ENCODE measurements at regions of chr3 and their contacts with region 1.

Region 1: DNA sequence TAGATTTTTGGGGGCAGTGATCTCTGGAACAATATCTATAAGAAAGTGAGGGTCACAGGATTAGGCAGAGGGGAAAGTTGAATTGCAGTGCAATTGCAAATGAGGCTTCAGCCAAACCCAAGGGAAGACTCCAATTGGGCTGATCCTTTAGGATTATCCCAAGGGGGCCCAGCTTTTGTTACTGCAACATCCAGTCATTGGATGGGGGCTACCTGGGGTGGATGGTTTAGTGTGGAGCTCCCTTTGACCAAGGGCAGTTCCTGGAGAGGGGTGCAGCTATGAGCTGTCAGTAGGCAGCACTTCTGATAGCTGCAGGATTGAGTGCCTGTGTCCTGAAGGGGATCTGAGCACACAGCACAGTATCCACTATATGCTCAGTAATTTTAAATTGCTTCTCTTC is 355.2 kb upstream of the AZI2 start:
- DNase-seq: no peak
- ATAC-seq: no peak
- H3K4me3 ChIP-seq: no peak overlapping the region
- H3K27ac ChIP-seq: no peak overlapping the region
- H3K4me1 ChIP-seq: no peaks in the 10 kb centered on the region
- H3K27me3 ChIP-seq: 0 out of 2 replicates have a peak, but pooled peaks cover 2% of the 10 kb centered on the region
- CTCF ChIP-seq: no peak

Region 2: DNA sequence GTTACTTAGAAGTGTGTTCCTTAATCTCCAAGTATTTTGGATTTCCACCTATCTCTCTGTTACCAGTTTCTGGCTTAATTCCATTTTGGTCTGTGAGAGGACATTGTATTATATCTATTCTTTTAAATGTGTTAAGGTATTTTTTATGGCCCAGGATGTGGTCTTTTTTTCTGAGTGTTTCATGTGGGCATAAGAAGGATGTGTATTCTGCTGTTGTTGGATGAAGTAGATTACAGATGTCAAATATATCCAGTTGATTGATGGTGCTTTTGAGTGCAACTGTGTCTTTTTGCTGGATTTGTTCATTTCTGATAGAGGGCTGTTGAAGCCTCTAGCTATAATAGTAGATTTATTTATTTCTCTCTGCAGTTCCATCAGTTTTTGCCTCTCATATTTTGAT is 218.7 kb before region 1 on chr3:
- CTCF ChIA-PET with region 1: no interaction called
- POLR2A ChIA-PET with region 1: interaction called, 11 read pairs
- intact Hi-C with region 1: no loop called
- DNase-seq: no peak
- ATAC-seq: no peak
- H3K4me3 ChIP-seq: no peak overlapping the region
- H3K27ac ChIP-seq: no peak overlapping the region
- H3K4me1 ChIP-seq: no peaks in the 10 kb centered on the region
- H3K27me3 ChIP-seq: no peaks in the 10 kb centered on the region
- CTCF ChIP-seq: no peak

Region 3: DNA sequence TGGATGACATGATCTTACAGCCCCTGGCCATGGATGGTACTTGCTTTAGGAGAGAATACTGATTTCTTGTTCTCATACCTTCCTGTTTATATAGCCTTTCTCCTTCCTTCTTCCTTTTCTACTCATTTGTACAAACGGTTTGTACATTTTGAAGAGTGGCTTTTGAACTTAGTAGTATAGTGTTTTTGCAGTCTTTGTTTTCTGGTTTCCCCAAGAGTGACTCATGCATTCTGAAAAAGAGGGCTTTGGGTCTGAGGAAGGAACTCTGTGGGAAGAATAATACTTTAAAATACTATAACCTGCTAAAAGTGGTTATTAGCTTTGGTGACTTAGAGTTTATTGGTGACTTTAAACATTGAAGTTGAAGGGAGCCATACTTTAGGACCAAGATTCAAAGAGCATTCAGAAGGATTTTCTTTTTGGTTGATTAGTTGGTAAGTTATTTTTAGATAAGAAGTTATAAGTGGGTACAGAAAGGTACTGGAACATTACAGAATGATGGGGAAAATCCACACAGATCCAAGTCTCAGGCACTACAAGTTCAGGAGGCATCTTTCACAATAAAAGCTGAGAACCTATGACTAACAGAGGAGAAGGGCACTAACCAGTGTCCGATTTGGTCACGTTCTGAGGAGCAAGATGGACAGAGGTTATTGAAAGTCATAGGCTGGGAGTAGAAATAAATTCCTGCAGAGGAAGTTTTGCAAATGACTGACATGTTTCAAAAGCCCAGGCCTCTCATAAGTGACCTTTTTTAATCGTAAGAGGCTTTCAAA is 14.4 kb after region 1 on chr3:
- CTCF ChIA-PET with region 1: no interaction called
- POLR2A ChIA-PET with region 1: no interaction called
- intact Hi-C with region 1: no loop called
- DNase-seq: no peak
- ATAC-seq: no peak
- H3K4me3 ChIP-seq: no peak overlapping the region
- H3K27ac ChIP-seq: no peak overlapping the region
- H3K4me1 ChIP-seq: no peaks in the 10 kb centered on the region
- H3K27me3 ChIP-seq: peaks cover 8% of the 10 kb centered on the region; the same call in 1 of the 2 replicates
- CTCF ChIP-seq: no peak

Measured in PC-3 (cell line).